Activated CD4-positive, alpha-beta memory T cell treated with anti-CD3 and anti-CD28 coated beads, Interleukin-2, amount 10 ng/mL, durations not matched to agents 7 days and 5 days (primary cell): ENCODE measurements at regions of chr12 and their contacts with region 1.

Region 1: GRCh38 chr12:49336645-49337584 is at the start of gene C1QL4:
- DNase-seq: peak; percentile 87
- H3K4me3 Mint-ChIP-seq: peak within 1 kb of the TSS; percentile 59
- H3K27ac Mint-ChIP-seq: no peak within 1 kb of the TSS
- H3K4me1 Mint-ChIP-seq: peaks cover 19% of the 10 kb centered on the region
- H3K27me3 Mint-ChIP-seq: peaks cover 86% of the 10 kb centered on the region
- total RNA-seq, gene C1QL4: not detected

Region 2: GRCh38 chr12:49296034-49296835 is 40.7 kb before region 1 on chr12:
- CTCF ChIA-PET with region 1: interaction called, 39 read pairs
- POLR2A ChIA-PET with region 1: interaction called, 17 read pairs
- DNase-seq: peak; percentile 68
- H3K4me3 Mint-ChIP-seq: peak overlapping the region; percentile 62
- H3K27ac Mint-ChIP-seq: no peak overlapping the region
- H3K4me1 Mint-ChIP-seq: peaks cover 34% of the 10 kb centered on the region
- H3K27me3 Mint-ChIP-seq: peaks cover 53% of the 10 kb centered on the region